ENCODE measurements at regions of chr5 and their contacts with region 1.

Region 1: DNA sequence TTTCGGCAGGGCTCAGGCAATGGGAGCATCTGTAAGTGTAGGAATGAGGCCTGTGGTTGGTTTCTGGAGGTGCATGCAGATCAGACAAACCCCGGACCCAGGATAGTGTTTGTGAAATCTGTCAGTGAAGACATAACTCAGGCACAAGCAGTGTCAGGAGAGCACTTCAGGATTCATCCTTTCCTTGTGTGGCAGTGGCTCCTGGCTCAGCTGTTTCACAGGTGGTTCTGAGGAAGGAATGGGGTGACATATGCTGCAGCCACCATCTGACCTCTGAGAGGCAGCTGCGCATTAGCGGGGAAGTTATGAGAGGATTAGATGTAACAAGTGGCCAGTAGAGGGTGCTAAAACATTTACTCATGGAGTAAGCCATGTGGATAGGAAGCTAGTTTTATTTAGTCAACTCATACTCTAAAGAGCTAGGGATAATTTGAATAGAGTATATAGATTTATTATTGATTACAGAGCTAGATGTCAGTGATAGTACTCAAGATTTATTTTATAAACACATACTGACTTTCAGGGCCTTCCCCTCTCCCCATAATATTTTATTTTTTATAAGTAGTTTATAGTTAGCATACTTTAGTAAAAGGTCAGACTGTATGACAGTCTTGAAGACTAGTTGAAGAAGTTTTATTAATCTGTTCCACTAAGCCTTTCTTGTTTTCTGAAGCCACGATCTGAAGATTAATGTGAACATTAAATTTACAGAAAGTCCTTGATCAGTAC is 28.4 kb downstream of the NNT start:
- DNase-seq: peak; percentile 87
- H3K4me3 ChIP-seq: no peak overlapping the region
- H3K27ac ChIP-seq: no peak overlapping the region
- H3K4me1 ChIP-seq: no peaks in the 10 kb centered on the region
- H3K27me3 ChIP-seq: no peaks in the 10 kb centered on the region
- CTCF ChIP-seq: peak; percentile 76

Region 2: GRCh38 chr5:43685252-43685950 is 54.1 kb after region 1 on chr5:
- CTCF ChIA-PET with region 1: no interaction called
- POLR2A ChIA-PET with region 1: no interaction called
- intact Hi-C with region 1: no loop called
- DNase-seq: no peak
- H3K4me3 ChIP-seq: no peak overlapping the region
- H3K27ac ChIP-seq: no peak overlapping the region
- H3K4me1 ChIP-seq: peaks cover 8% of the 10 kb centered on the region
- H3K27me3 ChIP-seq: no peaks in the 10 kb centered on the region
- CTCF ChIP-seq: no peak

Region 3: DNA sequence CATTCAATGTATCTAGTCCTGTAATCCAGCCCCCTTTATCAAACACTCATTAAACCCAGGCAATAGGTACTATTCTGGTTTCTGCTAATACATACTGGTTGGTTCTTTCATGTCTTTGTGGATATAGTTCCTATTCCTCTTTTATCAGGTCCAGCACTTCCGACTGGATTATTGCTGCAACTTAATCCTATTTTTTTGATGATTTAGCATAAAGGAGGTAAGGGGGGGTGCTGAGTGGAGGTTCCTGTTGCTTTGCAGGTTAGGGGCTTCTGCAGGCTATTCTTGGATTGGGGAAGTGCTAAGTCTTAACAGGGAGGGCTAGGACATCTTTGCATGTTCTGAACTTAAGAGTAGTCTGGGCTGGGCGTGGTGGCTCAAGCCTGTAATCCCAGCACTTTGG is 380.2 kb after region 1 on chr5:
- CTCF ChIA-PET with region 1: no interaction called
- POLR2A ChIA-PET with region 1: no interaction called
- intact Hi-C with region 1: no loop called
- DNase-seq: no peak
- H3K4me3 ChIP-seq: no peak overlapping the region
- H3K27ac ChIP-seq: no peak overlapping the region
- H3K4me1 ChIP-seq: no peaks in the 10 kb centered on the region
- H3K27me3 ChIP-seq: no peaks in the 10 kb centered on the region
- CTCF ChIP-seq: no peak

Region 4: DNA sequence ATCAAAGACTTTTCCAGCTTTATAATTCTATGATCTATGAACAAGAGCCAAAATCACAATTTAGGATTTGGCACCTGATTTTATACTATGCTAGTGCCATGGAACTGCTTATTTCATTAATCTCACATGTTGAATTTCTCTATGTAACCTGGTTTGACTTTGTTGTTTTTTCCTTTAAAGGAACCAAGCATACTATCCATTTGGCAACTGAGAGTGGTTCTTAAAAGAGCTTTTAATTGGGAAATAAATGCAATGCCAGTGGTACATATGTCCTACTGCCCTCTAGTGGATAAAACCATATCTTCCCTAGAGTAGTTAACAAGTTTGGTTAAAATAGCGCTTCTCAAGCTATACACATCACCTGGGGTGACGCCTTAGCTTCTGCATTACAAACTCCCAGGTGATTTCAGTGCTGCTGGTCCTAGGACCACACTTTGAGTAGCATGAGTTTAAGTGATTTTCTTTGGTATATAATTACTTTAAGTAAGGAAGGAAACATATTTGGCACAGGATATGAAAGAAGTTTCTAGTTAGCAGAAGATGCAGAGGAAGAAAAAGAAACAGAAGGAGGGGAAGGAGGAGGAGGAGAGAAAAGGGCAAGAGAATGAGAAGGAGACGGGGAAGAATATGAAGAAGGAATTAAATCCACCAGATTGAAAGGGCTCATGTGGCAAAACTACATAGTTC is 701.1 kb after region 1 on chr5:
- CTCF ChIA-PET with region 1: interaction called, 9 read pairs
- POLR2A ChIA-PET with region 1: no interaction called
- intact Hi-C with region 1: loop called (anchors 10 kb)
- DNase-seq: peak; percentile 64
- H3K4me3 ChIP-seq: no peak overlapping the region
- H3K27ac ChIP-seq: no peak overlapping the region
- H3K4me1 ChIP-seq: peaks cover 4% of the 10 kb centered on the region
- H3K27me3 ChIP-seq: no peaks in the 10 kb centered on the region
- CTCF ChIP-seq: peak; percentile 75

Region 5: DNA sequence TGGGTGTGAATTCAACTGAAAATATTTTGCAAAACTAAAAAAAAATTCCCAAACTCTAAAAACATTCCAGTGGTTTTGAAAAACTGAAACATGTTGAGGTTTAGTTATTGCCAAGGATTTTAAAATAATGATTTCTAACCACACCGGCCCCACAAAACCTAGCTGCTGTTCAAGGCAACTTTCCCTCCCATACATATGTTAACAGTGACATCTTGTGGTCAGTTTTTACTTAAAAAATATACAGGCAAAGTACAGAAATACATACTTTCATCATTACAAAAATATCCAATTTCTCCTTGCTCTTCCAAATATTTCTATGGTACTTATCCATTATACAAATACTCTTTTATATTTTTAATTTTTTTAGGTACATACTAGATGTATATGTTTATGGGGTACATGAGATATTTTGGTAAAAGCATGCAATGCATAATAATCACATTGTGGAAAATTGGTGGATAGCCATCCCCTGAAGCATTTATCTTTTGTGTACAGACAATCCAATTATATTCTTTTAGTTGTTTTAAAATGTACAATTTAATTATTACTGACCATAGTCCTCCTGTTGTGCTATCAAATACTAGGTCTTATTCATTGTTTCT is 1143.0 kb after region 1 on chr5:
- CTCF ChIA-PET with region 1: interaction called, 7 read pairs
- POLR2A ChIA-PET with region 1: no interaction called
- intact Hi-C with region 1: loop called (anchors 2 kb)
- DNase-seq: peak; percentile 67
- H3K4me3 ChIP-seq: no peak overlapping the region
- H3K27ac ChIP-seq: no peak overlapping the region
- H3K4me1 ChIP-seq: peaks cover 9% of the 10 kb centered on the region
- H3K27me3 ChIP-seq: no peaks in the 10 kb centered on the region
- CTCF ChIP-seq: peak; percentile 62